Body of pancreas (tissue), 4 donors: ENCODE measurements at regions of chr12 and their contacts with region 1.

Region 1: GRCh38 chr12:20946732-20947131 is 136.2 kb downstream of the SLCO1B3 start:
- DNase-seq: peak; percentile 45 to 62 (median 48)
- ATAC-seq: no peak
- H3K4me3 ChIP-seq: no peak overlapping the region
- H3K27ac ChIP-seq: no peak overlapping the region
- H3K4me1 ChIP-seq: no peaks in the 10 kb centered on the region
- H3K27me3 ChIP-seq: no peaks in the 10 kb centered on the region
- CTCF ChIP-seq: peak; percentile 20 to 59 (median 51)
- POLR2A ChIP-seq: no peak

Region 2: GRCh38 chr12:21065845-21066244 is 119.1 kb after region 1 on chr12:
- intact Hi-C with region 1: loop called (anchors 10 kb)
- DNase-seq: peak in 2 of 4 donors; percentile 14 to 18
- ATAC-seq: peak; percentile 45
- H3K4me3 ChIP-seq: no peak overlapping the region
- H3K27ac ChIP-seq: no peak overlapping the region
- H3K4me1 ChIP-seq: no peaks in the 10 kb centered on the region
- H3K27me3 ChIP-seq: no peaks in the 10 kb centered on the region
- CTCF ChIP-seq: peak; percentile 20 to 71 (median 57)
- POLR2A ChIP-seq: no peak

Region 3: DNA sequence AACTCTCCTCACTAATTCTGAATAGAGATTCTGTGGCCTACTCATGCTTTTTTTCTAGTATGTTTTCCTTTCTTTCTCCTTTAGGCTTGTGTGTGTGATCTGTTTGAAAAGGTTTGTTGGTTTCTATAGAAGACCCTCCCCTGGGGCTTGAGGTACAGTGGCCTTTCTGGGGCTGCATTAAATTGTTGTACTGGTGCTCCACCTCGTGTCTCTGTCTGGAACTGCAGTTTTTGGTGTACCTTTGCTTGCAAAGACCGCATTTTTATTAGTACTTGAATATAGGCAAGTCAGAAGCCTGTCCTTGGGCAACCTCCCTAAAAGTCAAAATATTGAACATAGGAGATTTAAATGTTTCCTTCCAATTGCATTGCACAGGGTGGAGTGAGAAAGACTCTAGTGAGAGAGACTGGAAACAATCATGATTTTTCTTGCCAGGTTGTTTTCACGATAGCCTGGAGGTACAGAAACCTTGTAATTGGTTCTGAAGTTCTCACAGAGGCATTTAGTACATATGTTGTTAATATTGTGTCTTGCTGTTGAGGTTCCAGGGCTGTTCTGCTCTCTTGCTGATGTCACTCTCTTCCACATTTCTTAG is 223.2 kb after region 1 on chr12:
- intact Hi-C with region 1: loop called (anchors 10 kb)
- DNase-seq: peak; percentile 32 to 65 (median 49)
- ATAC-seq: no peak
- H3K4me3 ChIP-seq: no peak overlapping the region
- H3K27ac ChIP-seq: no peak overlapping the region
- H3K4me1 ChIP-seq: no peaks in the 10 kb centered on the region
- H3K27me3 ChIP-seq: no peaks in the 10 kb centered on the region
- CTCF ChIP-seq: peak; percentile 48 to 72 (median 66)
- POLR2A ChIP-seq: no peak